B cell (primary cell): ENCODE measurements at regions of chr2 and their contacts with region 1.

Region 1: DNA sequence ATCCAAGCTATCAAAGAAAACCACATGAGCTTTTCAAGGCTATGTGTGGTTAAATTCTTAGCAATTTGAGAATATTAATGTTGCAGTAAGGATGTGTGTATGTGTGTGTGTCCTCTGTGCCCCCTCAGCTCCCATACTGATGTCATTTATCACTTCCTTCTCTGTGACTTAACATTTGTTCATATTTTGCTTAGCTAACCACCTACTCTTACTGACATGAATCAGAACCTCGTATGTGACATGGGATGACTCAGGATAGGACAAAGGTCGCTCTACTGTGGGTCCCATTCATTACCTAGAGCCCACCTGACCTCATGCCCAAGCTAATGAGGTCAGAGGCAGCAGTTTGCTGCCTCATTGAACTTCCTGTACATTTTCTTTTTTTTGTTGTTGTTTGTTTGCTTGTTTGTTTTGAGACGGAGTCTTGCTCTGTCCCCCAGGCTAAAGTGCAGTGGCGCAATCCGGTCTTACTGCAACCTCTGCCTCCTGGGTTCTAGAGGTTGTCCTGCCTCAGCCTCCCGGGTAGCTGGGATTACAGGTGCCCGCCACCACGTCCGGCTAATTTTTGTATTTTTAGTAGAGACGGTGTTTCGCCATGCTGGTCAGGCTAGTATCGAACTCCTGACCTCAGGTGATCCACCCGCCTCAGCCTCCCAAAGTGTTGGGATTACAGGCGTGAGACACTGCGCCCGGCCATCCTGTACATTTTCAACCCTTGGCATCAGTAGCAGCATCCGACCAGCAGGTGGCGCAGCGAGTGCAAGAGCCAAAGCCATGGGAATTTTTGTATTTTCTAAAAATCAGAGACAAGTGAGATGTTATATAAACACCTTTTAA is 36.4 kb downstream of the MOGAT1 start:
- DNase-seq: peak; percentile 75
- ATAC-seq: peak; percentile 57
- H3K4me3 ChIP-seq: no peak overlapping the region
- H3K4me3 Mint-ChIP-seq: no peak overlapping the region
- H3K27ac ChIP-seq: no peak overlapping the region
- H3K27ac Mint-ChIP-seq: no peak overlapping the region
- H3K4me1 ChIP-seq: peaks cover 6 to 8% of the 10 kb centered on the region in 2 donors
- H3K4me1 Mint-ChIP-seq: peaks cover 10% of the 10 kb centered on the region
- H3K27me3 ChIP-seq: peaks cover 0 to 4% (median 2%) of the 10 kb centered on the region in 4 experiments
- H3K27me3 Mint-ChIP-seq: peaks cover 52% of the 10 kb centered on the region
- CTCF ChIP-seq: peak; percentile 99

Region 2: GRCh38 chr2:222452422-222452950 is 255.4 kb before region 1 on chr2:
- CTCF ChIA-PET with region 1: no interaction called
- POLR2A ChIA-PET with region 1: no interaction called
- intact Hi-C with region 1: no loop called
- DNase-seq: no peak
- ATAC-seq: no peak
- H3K4me3 ChIP-seq: no peak overlapping the region
- H3K4me3 Mint-ChIP-seq: no peak overlapping the region
- H3K27ac ChIP-seq: no peak overlapping the region
- H3K27ac Mint-ChIP-seq: no peak overlapping the region
- H3K4me1 ChIP-seq: no peaks in the 10 kb centered on the region
- H3K4me1 Mint-ChIP-seq: no peaks in the 10 kb centered on the region
- H3K27me3 ChIP-seq: no peaks in the 10 kb centered on the region
- H3K27me3 Mint-ChIP-seq: no peaks in the 10 kb centered on the region
- CTCF ChIP-seq: no peak

Region 3: DNA sequence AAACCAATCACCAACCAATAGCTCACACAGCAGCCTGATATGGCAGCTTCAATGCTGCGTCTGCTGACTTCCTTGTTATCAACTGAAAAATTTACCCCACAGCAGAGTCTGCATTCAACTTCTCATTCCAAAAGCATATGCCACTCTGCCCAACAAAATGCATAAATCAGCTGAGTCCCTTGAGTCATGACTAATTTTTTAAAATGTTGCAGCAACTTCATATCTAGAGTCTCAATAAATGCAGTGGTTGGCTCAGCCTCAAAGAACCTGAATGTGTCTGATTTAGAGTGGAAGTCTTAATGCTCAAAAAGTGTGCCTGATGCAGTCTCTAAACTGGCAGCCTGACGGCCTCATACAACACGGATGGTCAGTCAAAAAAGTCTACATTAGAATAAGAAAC is 98.5 kb before region 1 on chr2:
- CTCF ChIA-PET with region 1: no interaction called
- POLR2A ChIA-PET with region 1: no interaction called
- intact Hi-C with region 1: no loop called
- DNase-seq: no peak
- ATAC-seq: no peak
- H3K4me3 ChIP-seq: no peak overlapping the region
- H3K4me3 Mint-ChIP-seq: no peak overlapping the region
- H3K27ac ChIP-seq: no peak overlapping the region
- H3K27ac Mint-ChIP-seq: no peak overlapping the region
- H3K4me1 ChIP-seq: no peaks in the 10 kb centered on the region
- H3K4me1 Mint-ChIP-seq: no peaks in the 10 kb centered on the region
- H3K27me3 ChIP-seq: no peaks in the 10 kb centered on the region
- H3K27me3 Mint-ChIP-seq: no peaks in the 10 kb centered on the region
- CTCF ChIP-seq: no peak

Region 4: GRCh38 chr2:222690564-222691200 is 17.2 kb before region 1 on chr2:
- CTCF ChIA-PET with region 1: interaction called, 19 read pairs
- POLR2A ChIA-PET with region 1: no interaction called
- intact Hi-C with region 1: no loop called
- DNase-seq: peak; percentile 86
- ATAC-seq: peak; percentile 100
- H3K4me3 ChIP-seq: no peak overlapping the region
- H3K4me3 Mint-ChIP-seq: no peak overlapping the region
- H3K27ac ChIP-seq: no peak overlapping the region
- H3K27ac Mint-ChIP-seq: no peak overlapping the region
- H3K4me1 ChIP-seq: peaks cover 4 to 6% of the 10 kb centered on the region in 2 donors
- H3K4me1 Mint-ChIP-seq: peaks cover 5% of the 10 kb centered on the region
- H3K27me3 ChIP-seq: no peaks in the 10 kb centered on the region
- H3K27me3 Mint-ChIP-seq: peaks cover 16% of the 10 kb centered on the region
- CTCF ChIP-seq: peak; percentile 100

Region 5: GRCh38 chr2:222722327-222722946 is 14.5 kb after region 1 on chr2:
- CTCF ChIA-PET with region 1: interaction called, 14 read pairs
- POLR2A ChIA-PET with region 1: no interaction called
- intact Hi-C with region 1: no loop called
- DNase-seq: no peak
- ATAC-seq: no peak
- H3K4me3 ChIP-seq: no peak overlapping the region
- H3K4me3 Mint-ChIP-seq: no peak overlapping the region
- H3K27ac ChIP-seq: no peak overlapping the region
- H3K27ac Mint-ChIP-seq: no peak overlapping the region
- H3K4me1 ChIP-seq: no peaks in the 10 kb centered on the region
- H3K4me1 Mint-ChIP-seq: peaks cover 5% of the 10 kb centered on the region
- H3K27me3 ChIP-seq: no peaks in the 10 kb centered on the region
- H3K27me3 Mint-ChIP-seq: no peaks in the 10 kb centered on the region
- CTCF ChIP-seq: no peak

Region 6: DNA sequence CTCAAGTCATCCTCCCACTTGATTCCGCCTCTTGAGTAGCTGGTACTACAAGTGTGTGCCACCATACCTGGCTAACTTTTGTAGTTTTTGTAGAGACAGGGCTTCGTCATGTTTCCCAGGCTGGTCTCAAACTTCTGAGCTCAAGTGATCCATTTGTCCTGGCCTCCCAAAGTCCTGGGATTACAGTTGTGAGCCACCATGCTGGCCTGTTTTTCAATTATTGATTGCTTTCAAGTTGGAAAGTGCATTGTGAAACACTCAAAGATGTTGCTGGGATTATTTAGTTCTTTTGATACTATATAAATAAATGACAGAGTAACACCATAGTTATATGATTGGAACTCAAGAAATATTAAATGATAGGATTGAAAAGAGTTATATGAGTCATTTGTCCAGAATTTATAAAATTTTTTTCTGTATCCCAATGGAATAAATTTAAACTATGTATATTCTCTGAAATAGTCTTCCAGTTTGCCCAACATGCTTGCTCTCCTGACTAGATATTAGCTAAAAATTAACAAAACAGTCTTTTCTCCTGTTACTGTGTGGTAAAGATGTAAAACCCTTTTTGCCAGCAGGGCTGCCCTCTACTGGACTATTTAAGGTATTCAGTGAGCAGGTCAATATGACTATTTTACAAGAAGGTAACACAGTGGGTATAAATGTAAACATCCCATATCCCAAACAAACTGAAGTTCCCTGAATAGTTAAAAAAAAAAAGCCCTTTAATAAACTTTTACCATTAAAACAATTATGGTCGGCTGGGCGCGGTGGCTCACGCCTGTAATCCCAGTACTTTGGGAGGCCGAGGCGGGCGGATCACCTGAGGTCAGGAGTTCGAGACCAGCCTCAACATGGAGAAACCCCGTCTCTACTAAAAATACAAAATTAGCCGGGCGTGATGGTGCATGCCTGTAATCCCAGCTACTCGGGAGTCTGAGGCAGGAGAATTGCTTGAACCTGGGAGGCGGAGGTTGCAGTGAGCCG is 195.6 kb after region 1 on chr2:
- CTCF ChIA-PET with region 1: interaction called, 108 read pairs
- POLR2A ChIA-PET with region 1: no interaction called
- intact Hi-C with region 1: no loop called
- DNase-seq: peak; percentile 59
- ATAC-seq: no peak
- H3K4me3 ChIP-seq: no peak overlapping the region
- H3K4me3 Mint-ChIP-seq: no peak overlapping the region
- H3K27ac ChIP-seq: no peak overlapping the region
- H3K27ac Mint-ChIP-seq: no peak overlapping the region
- H3K4me1 ChIP-seq: no peaks in the 10 kb centered on the region
- H3K4me1 Mint-ChIP-seq: peaks cover 10% of the 10 kb centered on the region
- H3K27me3 ChIP-seq: no peaks in the 10 kb centered on the region
- H3K27me3 Mint-ChIP-seq: no peaks in the 10 kb centered on the region
- CTCF ChIP-seq: peak; percentile 89

Region 7: DNA sequence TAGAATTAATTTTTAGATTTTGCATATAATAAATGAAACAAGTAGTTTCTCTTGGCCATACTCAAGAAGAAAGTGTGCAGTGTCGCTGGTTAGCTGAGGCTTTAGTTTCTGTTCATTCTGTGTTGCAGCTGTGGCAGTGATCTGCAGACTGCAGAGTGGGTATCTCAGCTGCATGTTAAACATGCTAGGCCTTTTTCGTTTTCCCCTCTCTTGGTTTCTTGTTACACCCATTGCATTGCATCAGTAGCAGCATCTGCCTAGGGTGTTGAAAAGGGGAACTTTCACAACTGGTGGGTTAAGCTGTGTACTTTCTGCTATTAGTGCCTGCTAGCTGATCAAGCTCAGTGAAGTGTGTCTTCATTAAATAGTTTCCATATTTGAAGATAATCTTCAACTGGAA is 204.2 kb after region 1 on chr2:
- CTCF ChIA-PET with region 1: interaction called, 46 read pairs
- POLR2A ChIA-PET with region 1: no interaction called
- intact Hi-C with region 1: no loop called
- DNase-seq: peak; percentile 80
- ATAC-seq: peak; percentile 99
- H3K4me3 ChIP-seq: peak overlapping the region in 3 of 5 experiments; percentile 2 to 37 (median 36)
- H3K4me3 Mint-ChIP-seq: peak overlapping the region; percentile 73
- H3K27ac ChIP-seq: peak overlapping the region; percentile 74 to 86
- H3K27ac Mint-ChIP-seq: peak overlapping the region; percentile 90
- H3K4me1 ChIP-seq: peaks cover 31% of the 10 kb centered on the region in 2 donors
- H3K4me1 Mint-ChIP-seq: peaks cover 45% of the 10 kb centered on the region
- H3K27me3 ChIP-seq: no peaks in the 10 kb centered on the region
- H3K27me3 Mint-ChIP-seq: no peaks in the 10 kb centered on the region
- CTCF ChIP-seq: no peak

Region 8: DNA sequence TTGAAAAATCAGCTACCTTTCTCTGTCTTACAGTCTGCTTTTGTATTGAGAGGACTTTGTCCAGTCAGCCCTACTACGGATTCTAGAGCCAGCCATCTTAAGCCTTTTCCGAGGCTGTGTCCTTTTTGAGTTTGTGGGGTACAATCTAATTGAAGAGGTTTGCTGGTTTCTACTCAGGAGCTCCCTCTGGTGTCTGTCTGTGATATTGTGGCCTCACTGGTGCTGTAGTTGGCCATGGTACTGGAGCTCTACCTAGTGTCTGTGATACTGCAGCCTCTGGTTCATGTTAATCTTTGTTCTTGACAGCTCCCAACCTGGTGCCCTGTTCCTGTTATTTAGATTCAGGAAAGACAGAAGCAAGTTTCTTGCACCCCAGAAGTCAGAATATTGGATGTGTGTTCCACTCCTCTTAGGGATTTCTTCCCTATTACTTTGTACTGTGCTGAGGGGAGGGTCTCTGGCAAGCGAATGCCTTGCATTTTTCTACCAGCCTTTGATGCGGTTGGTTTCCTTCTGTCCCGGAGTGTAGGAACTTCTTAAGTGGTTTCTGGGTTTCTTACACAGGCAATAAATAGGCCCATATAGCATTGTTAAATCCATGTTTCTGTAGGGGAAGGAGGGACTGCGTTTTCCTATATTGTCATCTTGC is 231.4 kb after region 1 on chr2:
- CTCF ChIA-PET with region 1: interaction called, 44 read pairs
- POLR2A ChIA-PET with region 1: no interaction called
- intact Hi-C with region 1: loop called (anchors 1 kb)
- DNase-seq: peak; percentile 66
- ATAC-seq: peak; percentile 64
- H3K4me3 ChIP-seq: no peak overlapping the region
- H3K4me3 Mint-ChIP-seq: no peak overlapping the region
- H3K27ac ChIP-seq: no peak overlapping the region
- H3K27ac Mint-ChIP-seq: no peak overlapping the region
- H3K4me1 ChIP-seq: no peaks in the 10 kb centered on the region
- H3K4me1 Mint-ChIP-seq: no peaks in the 10 kb centered on the region
- H3K27me3 ChIP-seq: no peaks in the 10 kb centered on the region
- H3K27me3 Mint-ChIP-seq: no peaks in the 10 kb centered on the region
- CTCF ChIP-seq: peak; percentile 77